ENCODE measurements at regions of chr12 and their contacts with region 1.

Region 1: DNA sequence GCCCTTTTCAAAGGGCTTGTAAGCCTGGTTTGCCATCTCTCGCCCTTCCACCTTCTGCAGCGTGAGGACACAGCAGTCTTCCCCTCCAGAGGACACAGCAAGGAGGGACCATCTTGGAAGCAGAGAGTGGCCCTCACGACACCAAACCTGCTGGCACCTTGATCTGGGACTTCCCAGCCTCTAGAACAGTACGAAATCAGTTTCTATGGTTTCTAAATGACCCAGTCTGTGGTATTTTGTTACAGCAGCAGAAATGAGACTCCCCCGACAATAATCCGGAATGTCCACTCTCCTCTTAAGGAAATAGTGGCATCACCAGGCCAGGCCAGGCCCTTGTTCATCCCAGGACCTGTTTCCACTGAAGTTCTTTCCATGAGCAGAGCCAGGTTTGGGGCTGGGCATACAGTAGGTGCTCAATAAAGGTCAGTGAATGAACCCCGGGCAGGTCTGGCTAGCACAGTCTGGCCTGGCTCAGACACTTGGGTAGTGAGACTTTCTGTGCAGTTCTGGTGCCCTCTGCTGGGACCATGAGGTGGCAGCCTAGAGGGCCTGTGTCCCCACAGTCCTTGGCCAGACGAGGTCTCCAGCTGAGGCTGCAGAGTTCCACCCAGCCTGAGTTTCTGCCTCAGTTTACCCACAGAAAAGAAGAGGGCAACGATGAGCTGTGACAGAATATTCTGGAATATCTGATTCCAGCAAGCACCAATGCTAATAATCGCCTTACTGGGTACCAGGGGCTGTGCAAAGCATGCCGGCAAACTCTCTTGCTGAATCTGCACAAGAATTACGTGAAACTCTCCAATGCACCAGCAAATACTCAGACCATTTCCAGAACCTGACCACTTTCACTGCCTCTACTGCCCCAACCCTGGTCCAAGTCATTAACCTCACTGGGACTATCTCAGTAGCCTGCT is 14.0 kb downstream of the ABCB9 start:
- DNase-seq: peak; percentile 66 to 76
- H3K4me3 ChIP-seq: no peak overlapping the region
- H3K27ac ChIP-seq: no peak overlapping the region
- H3K4me1 ChIP-seq: peaks cover 10 to 14% of the 10 kb centered on the region in 2 donors
- H3K27me3 ChIP-seq: no peaks in the 10 kb centered on the region
- CTCF ChIP-seq: peak; percentile 8 to 90 (median 89)
- POLR2A ChIP-seq: no peak

Region 2: GRCh38 chr12:122793685-122794106 is 158.5 kb before region 1 on chr12:
- intact Hi-C with region 1: loop called (anchors 10 kb)
- DNase-seq: no peak
- H3K4me3 ChIP-seq: no peak overlapping the region
- H3K27ac ChIP-seq: no peak overlapping the region
- H3K4me1 ChIP-seq: no peaks in the 10 kb centered on the region
- H3K27me3 ChIP-seq: no peaks in the 10 kb centered on the region
- CTCF ChIP-seq: peak; percentile 59 to 69 (median 68)
- POLR2A ChIP-seq: no peak

Region 3: GRCh38 chr12:122909442-122910288 is 42.6 kb before region 1 on chr12:
- intact Hi-C with region 1: loop called (anchors 1 kb)
- DNase-seq: peak in 1 of 2 donors; percentile 76
- H3K4me3 ChIP-seq: no peak overlapping the region
- H3K27ac ChIP-seq: peak overlapping the region; percentile 70 to 77
- H3K4me1 ChIP-seq: no peaks in the 10 kb centered on the region
- H3K27me3 ChIP-seq: no peaks in the 10 kb centered on the region
- CTCF ChIP-seq: no peak
- POLR2A ChIP-seq: no peak

Region 4: GRCh38 chr12:122980183-122981046 is 28.2 kb after region 1 on chr12 and contains the start of gene ARL6IP4:
- intact Hi-C with region 1: no loop called
- DNase-seq: peak in 1 of 2 donors; percentile 46
- H3K4me3 ChIP-seq: peak within 1 kb of the TSS; percentile 84 to 99 (median 99)
- H3K27ac ChIP-seq: peak within 1 kb of the TSS; percentile 89 to 90
- H3K4me1 ChIP-seq: peaks cover 28 to 37% of the 10 kb centered on the region in 2 donors
- H3K27me3 ChIP-seq: no peaks in the 10 kb centered on the region
- CTCF ChIP-seq: no peak
- POLR2A ChIP-seq: no peak
- total RNA-seq, gene ARL6IP4: 196 to 279 (median 234) TPM

Region 5: GRCh38 chr12:123813349-123813748 is 861.1 kb after region 1 on chr12:
- intact Hi-C with region 1: no loop called
- DNase-seq: no peak
- H3K4me3 ChIP-seq: no peak overlapping the region
- H3K27ac ChIP-seq: no peak overlapping the region
- H3K4me1 ChIP-seq: no peaks in the 10 kb centered on the region
- H3K27me3 ChIP-seq: no peaks in the 10 kb centered on the region
- CTCF ChIP-seq: no peak
- POLR2A ChIP-seq: no peak

Measured in breast epithelium (tissue), 4 donors.